Calu3 (cell line): ENCODE measurements at regions of chr14 and their contacts with region 1.

Region 1: GRCh38 chr14:55807059-55807499 is 227.1 kb downstream of the KTN1 start:
- DNase-seq: peak; percentile 90
- H3K4me3 Mint-ChIP-seq: peak overlapping the region; percentile 1
- H3K27ac Mint-ChIP-seq: peak overlapping the region; percentile 92
- H3K4me1 Mint-ChIP-seq: peaks cover 61% of the 10 kb centered on the region
- H3K27me3 Mint-ChIP-seq: no peaks in the 10 kb centered on the region
- CTCF ChIP-seq: no peak

Region 2: DNA sequence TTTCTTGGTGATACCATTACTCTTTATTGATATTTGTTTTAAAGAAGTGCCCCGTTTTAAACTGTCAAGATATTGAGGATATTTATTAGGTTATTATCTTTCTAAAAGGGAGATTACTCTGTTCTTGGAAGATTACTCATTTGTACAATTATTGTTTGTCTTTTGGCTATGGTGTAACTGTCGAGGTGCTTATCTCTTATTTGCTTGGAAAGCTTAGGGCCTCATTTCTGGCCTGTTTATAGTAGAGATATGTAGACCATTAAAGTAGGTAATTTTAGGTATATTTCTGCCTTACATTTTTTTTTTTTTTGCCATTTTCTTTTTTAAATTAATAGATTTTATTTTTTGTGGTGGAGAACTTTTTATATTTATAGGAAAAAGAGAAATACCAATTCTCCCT is 152.8 kb before region 1 on chr14:
- CTCF ChIA-PET with region 1: no interaction called
- intact Hi-C with region 1: no loop called
- DNase-seq: no peak
- H3K4me3 Mint-ChIP-seq: no peak overlapping the region
- H3K27ac Mint-ChIP-seq: no peak overlapping the region
- H3K4me1 Mint-ChIP-seq: no peaks in the 10 kb centered on the region
- H3K27me3 Mint-ChIP-seq: no peaks in the 10 kb centered on the region
- CTCF ChIP-seq: no peak

Region 3: GRCh38 chr14:55707365-55707804 is 99.7 kb before region 1 on chr14:
- CTCF ChIA-PET with region 1: no interaction called
- intact Hi-C with region 1: loop called (anchors 5 kb)
- DNase-seq: no peak
- H3K4me3 Mint-ChIP-seq: no peak overlapping the region
- H3K27ac Mint-ChIP-seq: no peak overlapping the region
- H3K4me1 Mint-ChIP-seq: peaks cover 22% of the 10 kb centered on the region
- H3K27me3 Mint-ChIP-seq: no peaks in the 10 kb centered on the region
- CTCF ChIP-seq: peak; percentile 54

Region 4: GRCh38 chr14:55752586-55753390 is 54.3 kb before region 1 on chr14:
- CTCF ChIA-PET with region 1: no interaction called
- intact Hi-C with region 1: loop called (anchors 2 kb)
- DNase-seq: peak; percentile 78
- H3K4me3 Mint-ChIP-seq: no peak overlapping the region
- H3K27ac Mint-ChIP-seq: no peak overlapping the region
- H3K4me1 Mint-ChIP-seq: peaks cover 51% of the 10 kb centered on the region
- H3K27me3 Mint-ChIP-seq: no peaks in the 10 kb centered on the region
- CTCF ChIP-seq: no peak

Region 5: GRCh38 chr14:55832122-55832911 is 25.2 kb after region 1 on chr14:
- CTCF ChIA-PET with region 1: interaction called, 3 read pairs
- intact Hi-C with region 1: loop called (anchors 2 kb)
- DNase-seq: peak; percentile 61
- H3K4me3 Mint-ChIP-seq: peak overlapping the region; percentile 66
- H3K27ac Mint-ChIP-seq: peak overlapping the region; percentile 87
- H3K4me1 Mint-ChIP-seq: peaks cover 63% of the 10 kb centered on the region
- H3K27me3 Mint-ChIP-seq: no peaks in the 10 kb centered on the region
- CTCF ChIP-seq: no peak

Region 6: GRCh38 chr14:55889124-55889523 is 82.0 kb after region 1 on chr14:
- CTCF ChIA-PET with region 1: no interaction called
- intact Hi-C with region 1: loop called (anchors 1 kb)
- DNase-seq: peak; percentile 56
- H3K4me3 Mint-ChIP-seq: no peak overlapping the region
- H3K27ac Mint-ChIP-seq: no peak overlapping the region
- H3K4me1 Mint-ChIP-seq: peaks cover 10% of the 10 kb centered on the region
- H3K27me3 Mint-ChIP-seq: peaks cover 18% of the 10 kb centered on the region
- CTCF ChIP-seq: no peak